ENCODE measurements at regions of chr11 and their contacts with region 1.

Region 1: DNA sequence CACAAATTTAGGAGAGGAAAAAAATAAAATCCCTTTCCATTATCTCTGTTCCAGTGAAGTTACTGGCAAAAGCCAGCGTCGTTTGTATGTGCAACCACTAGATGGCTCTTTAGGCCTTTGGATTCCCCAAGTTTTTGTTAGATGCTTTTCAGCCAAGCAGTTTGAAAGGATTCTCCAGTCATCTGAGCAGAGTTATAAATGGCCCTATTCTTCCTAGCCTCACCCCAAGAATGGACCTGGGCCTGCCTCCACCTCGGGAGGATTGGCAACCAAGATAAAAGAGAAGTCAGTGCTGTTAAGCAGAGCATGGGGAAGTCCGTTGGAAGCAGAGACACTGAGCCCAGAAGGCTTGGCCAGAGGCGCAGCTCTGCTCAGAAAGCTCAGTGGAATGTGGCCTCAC is 15.4 kb downstream of the FAM181B start:
- DNase-seq: peak in 1 of 2 donors; percentile 46
- ATAC-seq: peak; percentile 85
- H3K4me3 ChIP-seq: no peak overlapping the region
- H3K27ac ChIP-seq: no peak overlapping the region
- H3K4me1 ChIP-seq: peaks cover 9% of the 10 kb centered on the region in 2 donors
- H3K27me3 ChIP-seq: no peaks in the 10 kb centered on the region

Region 2: GRCh38 chr11:82867495-82868082 is 149.3 kb after region 1 on chr11:
- intact Hi-C with region 1: loop called (anchors 2 kb)
- DNase-seq: peak; percentile 68 to 72
- ATAC-seq: peak; percentile 82
- H3K4me3 ChIP-seq: peak overlapping the region in 1 of 2 donors; percentile 41
- H3K27ac ChIP-seq: no peak overlapping the region
- H3K4me1 ChIP-seq: peaks cover 0 to 4% of the 10 kb centered on the region in 2 donors
- H3K27me3 ChIP-seq: no peaks in the 10 kb centered on the region

Measured in aorta (tissue), 5 donors.